BJ (cell line): ENCODE measurements at regions of chr5 and their contacts with region 1.

Region 1: DNA sequence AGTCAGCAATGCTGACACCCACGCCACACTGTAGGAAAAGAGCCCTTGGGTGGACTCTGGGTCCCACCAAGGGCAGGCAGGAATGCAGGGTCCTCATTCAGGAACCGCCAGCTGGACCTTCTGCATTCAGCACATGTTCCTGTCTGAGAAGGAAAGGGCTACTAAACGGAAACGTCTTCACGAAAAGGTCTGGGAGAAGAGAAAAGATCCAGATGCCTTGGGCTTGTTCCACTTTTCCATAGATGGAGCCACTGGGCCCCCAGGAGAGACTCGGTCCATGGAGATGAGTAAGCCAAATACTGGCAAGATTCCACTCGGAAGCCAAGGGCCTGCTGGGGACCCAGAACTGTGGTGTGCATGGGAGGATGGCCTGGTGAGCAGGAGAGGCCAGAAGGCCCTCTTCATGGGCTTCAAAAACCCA is 38.4 kb downstream of the LHFPL2 start:
- DNase-seq: no peak
- H3K4me3 ChIP-seq: no peak overlapping the region
- H3K27me3 ChIP-seq: no peaks in the 10 kb centered on the region
- CTCF ChIP-seq: peak; percentile 41

Region 2: DNA sequence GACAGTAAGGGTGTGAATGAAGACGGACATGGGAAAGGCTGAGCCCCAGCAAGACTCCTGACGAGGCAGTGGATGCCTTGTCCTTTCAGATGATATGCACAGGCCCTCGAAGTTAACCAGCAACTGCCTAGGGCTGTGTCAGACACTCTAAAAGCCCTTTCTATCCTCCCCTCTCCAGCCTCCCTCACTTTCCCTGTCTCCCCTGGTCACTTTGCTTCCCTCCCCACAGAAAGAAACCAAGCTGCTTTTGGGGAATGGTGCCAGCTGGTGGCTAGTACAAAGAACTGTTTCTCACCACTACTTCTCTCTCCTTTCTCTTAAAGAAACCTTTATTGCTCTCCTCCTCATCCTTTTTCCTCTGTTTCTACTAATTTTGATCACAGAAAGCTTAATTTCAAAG is 17.0 kb after region 1 on chr5:
- CTCF ChIA-PET with region 1: interaction called, 14 read pairs
- POLR2A ChIA-PET with region 1: no interaction called
- DNase-seq: no peak
- H3K4me3 ChIP-seq: no peak overlapping the region
- H3K27me3 ChIP-seq: no peaks in the 10 kb centered on the region
- CTCF ChIP-seq: peak; percentile 52

Region 3: GRCh38 chr5:78813906-78814530 is 203.8 kb after region 1 on chr5:
- CTCF ChIA-PET with region 1: no interaction called
- POLR2A ChIA-PET with region 1: interaction called, 12 read pairs
- DNase-seq: peak; percentile 59
- H3K4me3 ChIP-seq: no peak overlapping the region
- H3K27me3 ChIP-seq: no peaks in the 10 kb centered on the region
- CTCF ChIP-seq: no peak